ENCODE measurements at regions of chr10 and their contacts with region 1.

Region 1: DNA sequence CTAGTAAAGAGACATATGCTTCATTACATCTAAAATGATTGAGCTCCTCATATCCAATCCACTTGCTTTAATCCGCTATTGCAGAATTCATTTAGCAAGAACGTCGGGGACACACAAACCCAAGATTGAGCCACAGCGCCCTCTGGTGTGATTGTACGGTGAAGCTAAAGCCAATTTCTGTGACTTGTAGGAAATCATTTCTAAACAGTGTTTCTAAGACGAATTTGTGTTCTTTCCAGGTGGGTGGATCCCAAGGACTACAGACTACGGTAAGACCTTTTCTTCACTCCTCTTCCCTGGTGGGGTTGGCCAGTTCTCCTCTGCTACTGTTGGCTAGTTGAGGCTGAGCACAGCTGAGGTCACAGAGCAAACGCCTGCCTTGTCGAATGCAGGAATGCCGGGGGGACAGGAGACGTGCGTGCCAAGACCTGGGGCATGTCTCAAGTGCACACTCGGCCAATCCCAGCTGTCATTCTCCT is 5.2 kb downstream of the DMBT1 start:
- DNase-seq: peak; percentile 18 to 52
- ATAC-seq: peak; percentile 82 to 93
- H3K4me3 ChIP-seq: peak overlapping the region; percentile 28 to 38 (median 31)
- H3K27ac ChIP-seq: no peak overlapping the region
- H3K4me1 ChIP-seq: peaks cover 0 to 7% of the 10 kb centered on the region in 2 donors
- H3K27me3 ChIP-seq: peaks cover 0 to 2% (median 0%) of the 10 kb centered on the region in 3 donors
- CTCF ChIP-seq: peak; percentile 72 to 86 (median 79)
- POLR2A ChIP-seq: no peak

Region 2: GRCh38 chr10:122298598-122299301 is 267.0 kb before region 1 on chr10:
- in situ Hi-C with region 1: loop called (anchors 5 to 10 kb)
- intact Hi-C with region 1: loop called (anchors 1 kb)
- DNase-seq: peak; percentile 50 to 56
- ATAC-seq: peak; percentile 78 to 82
- H3K4me3 ChIP-seq: no peak overlapping the region
- H3K27ac ChIP-seq: no peak overlapping the region
- H3K4me1 ChIP-seq: peaks cover 0 to 6% of the 10 kb centered on the region in 2 donors
- H3K27me3 ChIP-seq: peaks cover 0 to 3% (median 0%) of the 10 kb centered on the region in 3 donors
- CTCF ChIP-seq: peak; percentile 79 to 92 (median 86)
- POLR2A ChIP-seq: no peak

Region 3: GRCh38 chr10:122342293-122343134 is 223.3 kb before region 1 on chr10:
- in situ Hi-C with region 1: loop called in 2 of 4 experiments (anchors 10 kb)
- intact Hi-C with region 1: loop called (anchors 2 kb)
- DNase-seq: no peak
- ATAC-seq: peak; percentile 37 to 44
- H3K4me3 ChIP-seq: no peak overlapping the region
- H3K27ac ChIP-seq: no peak overlapping the region
- H3K4me1 ChIP-seq: peaks cover 0 to 8% of the 10 kb centered on the region in 2 donors
- H3K27me3 ChIP-seq: no peaks in the 10 kb centered on the region
- CTCF ChIP-seq: peak; percentile 51 to 78 (median 73)
- POLR2A ChIP-seq: no peak

Region 4: GRCh38 chr10:122435212-122435827 is 130.4 kb before region 1 on chr10:
- in situ Hi-C with region 1: loop called in 3 of 4 experiments (anchors 10 to 25 kb)
- intact Hi-C with region 1: loop called (anchors 2 kb)
- DNase-seq: no peak
- ATAC-seq: no peak
- H3K4me3 ChIP-seq: no peak overlapping the region
- H3K27ac ChIP-seq: no peak overlapping the region
- H3K4me1 ChIP-seq: no peaks in the 10 kb centered on the region
- H3K27me3 ChIP-seq: no peaks in the 10 kb centered on the region
- CTCF ChIP-seq: peak; percentile 64 to 87 (median 66)
- POLR2A ChIP-seq: no peak

Region 5: GRCh38 chr10:122461367-122461728 is 104.4 kb before region 1 on chr10 and contains the start of gene HTRA1:
- in situ Hi-C with region 1: loop called in 1 of 4 experiments (anchors 10 kb)
- intact Hi-C with region 1: loop called (anchors 10 kb)
- DNase-seq: peak; percentile 38 to 41
- ATAC-seq: peak; percentile 22 to 48
- H3K4me3 ChIP-seq: peak within 1 kb of the TSS; percentile 68 to 79 (median 72)
- H3K27ac ChIP-seq: peak within 1 kb of the TSS; percentile 69 to 73 (median 70)
- H3K4me1 ChIP-seq: peaks cover 21 to 28% of the 10 kb centered on the region in 2 donors
- H3K27me3 ChIP-seq: no peaks in the 10 kb centered on the region
- CTCF ChIP-seq: no peak
- POLR2A ChIP-seq: peak; percentile 42 to 44
- total RNA-seq, gene HTRA1: 14.2 to 23.2 (median 17.2) TPM